ENCODE measurements at regions of chr2 and their contacts with region 1.

Region 1: DNA sequence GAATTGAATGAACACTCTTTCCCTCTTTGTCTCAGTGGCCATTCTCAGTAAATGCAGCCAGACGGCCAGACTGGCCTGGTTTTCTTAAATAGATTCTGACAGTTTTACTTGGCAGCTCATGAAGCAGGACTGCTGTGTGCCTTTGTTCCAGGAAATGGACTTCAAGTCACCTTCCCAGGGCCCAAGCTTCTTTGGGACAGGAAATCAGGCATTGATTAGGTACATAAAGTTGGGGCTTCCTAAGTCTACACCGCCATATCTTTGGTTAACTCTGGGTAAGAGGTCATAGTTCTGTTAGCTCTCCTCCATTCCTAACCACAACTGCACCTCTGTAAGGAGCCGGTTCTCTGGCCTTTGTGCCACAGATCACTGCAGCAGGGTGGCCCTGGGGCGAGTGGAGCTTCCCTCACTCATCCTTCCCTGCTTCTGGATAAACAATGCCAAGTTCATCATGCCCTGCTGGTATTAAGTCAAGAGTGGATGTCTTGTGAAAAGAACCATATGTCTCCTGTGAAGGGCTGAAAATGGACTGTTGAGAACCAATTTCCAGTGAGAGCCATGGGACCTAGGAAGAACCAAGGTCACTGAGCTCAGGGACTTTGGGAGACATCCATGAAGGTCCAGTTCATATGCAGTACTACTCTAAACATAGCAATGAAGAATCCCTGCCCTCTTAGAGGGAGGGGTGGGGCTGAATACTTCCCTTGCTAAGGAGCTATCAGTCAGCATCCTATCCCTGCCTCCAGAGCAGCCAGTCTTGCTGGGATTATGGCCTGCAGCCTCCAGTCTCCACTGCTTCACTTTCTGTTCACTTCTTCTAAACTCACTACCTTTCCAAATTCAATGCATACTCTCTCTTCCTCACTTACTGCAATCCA is 122.6 kb upstream of the XPO1 start:
- DNase-seq: no peak
- H3K4me3 ChIP-seq: no peak overlapping the region
- H3K4me1 ChIP-seq: no peaks in the 10 kb centered on the region
- H3K27me3 ChIP-seq: no peaks in the 10 kb centered on the region

Region 2: DNA sequence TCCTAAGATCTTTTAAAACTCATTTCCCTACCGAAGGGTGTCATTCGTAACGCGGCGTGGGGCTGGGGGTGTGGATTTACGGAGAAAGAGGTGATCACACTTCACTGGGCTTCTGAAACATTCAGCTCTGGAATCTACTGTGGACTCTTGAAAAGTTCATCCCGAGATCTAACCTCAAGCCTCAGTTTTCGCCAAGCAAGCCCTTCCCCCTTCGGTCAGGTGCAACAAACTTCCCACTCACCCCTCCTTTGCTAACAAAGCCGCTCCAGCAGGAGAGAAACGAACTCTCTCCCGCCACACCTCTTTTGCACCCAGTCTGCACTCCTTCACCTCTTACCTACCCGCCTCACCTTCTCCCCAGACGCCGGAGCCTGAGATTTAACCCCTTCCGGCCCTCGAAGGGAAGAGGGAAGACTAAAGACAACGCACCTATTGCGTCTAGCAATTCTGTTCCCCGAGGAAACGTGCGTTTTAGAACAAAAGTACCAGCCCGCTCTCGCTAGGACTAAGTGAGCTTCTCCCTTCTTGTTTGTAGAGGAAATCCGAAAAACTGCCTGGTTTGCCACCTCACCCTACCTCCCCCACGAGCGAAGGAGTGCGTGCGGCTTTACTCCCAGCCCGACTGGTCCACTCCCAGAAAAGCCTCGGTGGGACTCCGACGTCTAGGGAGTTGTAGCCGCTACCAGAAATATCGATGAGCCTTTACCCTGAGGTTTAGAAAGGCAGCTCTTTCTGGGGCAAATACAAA is 643.8 kb before region 1 on chr2:
- in situ Hi-C with region 1: no loop called
- DNase-seq: peak; percentile 77 to 84
- H3K4me3 ChIP-seq: peak overlapping the region; percentile 91
- H3K4me1 ChIP-seq: peaks cover 11% of the 10 kb centered on the region
- H3K27me3 ChIP-seq: no peaks in the 10 kb centered on the region

Region 3: DNA sequence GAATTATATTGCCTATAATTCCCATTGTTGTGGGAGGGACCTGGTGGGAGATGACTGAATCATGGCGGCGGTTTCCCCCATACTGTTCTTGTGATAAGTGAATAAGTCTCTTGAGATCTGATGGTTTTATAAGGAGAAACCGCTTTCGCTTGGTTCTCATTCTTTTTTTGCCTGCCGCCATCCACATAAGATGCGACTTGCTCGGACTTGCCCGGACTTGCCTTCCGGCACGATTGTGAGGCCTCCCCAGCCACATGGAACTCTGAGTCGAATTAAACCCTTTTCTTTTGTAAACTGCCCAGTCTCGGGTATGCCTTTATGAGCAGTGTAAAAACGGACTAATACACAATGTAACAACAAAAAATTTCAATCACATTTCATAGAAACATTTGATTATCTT is 383.0 kb before region 1 on chr2:
- in situ Hi-C with region 1: no loop called
- DNase-seq: peak; percentile 53 to 71
- H3K4me3 ChIP-seq: no peak overlapping the region
- H3K4me1 ChIP-seq: peaks cover 12% of the 10 kb centered on the region
- H3K27me3 ChIP-seq: no peaks in the 10 kb centered on the region

Region 4: DNA sequence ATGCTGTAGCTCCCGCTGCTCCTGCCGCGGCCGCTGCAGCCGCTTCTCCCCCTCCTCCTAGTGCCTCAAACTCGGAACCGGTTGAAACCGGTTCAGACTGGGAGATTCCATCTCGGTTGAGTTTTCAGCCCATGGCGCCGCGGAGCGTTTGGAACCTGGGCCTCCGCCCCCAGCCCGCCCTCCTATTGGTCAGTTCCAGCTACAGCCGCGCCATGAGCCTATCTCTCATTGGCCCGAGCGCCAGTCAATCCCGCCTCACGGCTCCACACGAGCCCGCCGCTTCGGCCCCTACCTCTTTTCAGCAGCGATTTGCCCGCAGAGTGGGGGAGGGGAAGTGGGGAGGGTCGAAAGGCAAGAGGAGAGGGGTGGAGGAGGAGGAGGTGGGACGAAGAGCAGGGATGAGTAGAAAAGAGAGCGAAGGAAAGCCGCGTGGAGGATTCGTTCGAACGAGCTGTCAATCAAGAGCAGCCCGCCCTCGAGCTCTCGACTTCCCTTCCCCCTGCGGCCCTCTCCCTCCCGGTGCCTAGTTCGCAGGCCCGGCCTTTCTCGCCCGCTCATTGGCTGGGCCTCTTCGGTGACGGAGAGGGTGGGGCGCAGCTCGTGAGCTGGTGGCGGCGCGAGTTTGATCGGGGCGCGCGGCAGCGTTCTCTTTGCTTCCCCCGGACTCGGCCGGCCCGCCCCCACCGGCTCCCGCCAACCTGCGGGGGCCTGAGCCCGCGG is 122.4 kb before region 1 on chr2 and contains the start of gene XPO1:
- in situ Hi-C with region 1: loop called (anchors 10 kb)
- DNase-seq: peak; percentile 99 to 100
- H3K4me3 ChIP-seq: peak within 1 kb of the TSS; percentile 77
- H3K4me1 ChIP-seq: peaks cover 29% of the 10 kb centered on the region
- H3K27me3 ChIP-seq: no peaks in the 10 kb centered on the region

Region 5: DNA sequence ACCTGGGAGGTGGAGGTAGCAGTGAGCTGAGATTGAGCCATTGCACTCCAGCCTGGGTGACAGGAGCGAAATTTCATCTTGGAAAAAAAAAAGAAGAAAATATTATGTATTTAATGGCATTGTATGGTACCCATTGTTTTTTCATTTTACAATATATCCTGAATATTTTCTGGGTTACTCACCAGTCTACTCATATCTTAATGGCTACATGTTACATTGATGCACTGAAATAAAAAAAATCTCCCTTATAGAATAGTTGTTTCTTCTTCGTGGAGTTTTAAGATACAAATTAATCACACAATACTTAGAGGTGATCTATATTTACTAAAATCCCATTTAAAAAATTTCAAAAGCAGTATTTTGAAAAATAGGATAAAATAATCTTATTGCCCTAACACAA is 56.3 kb before region 1 on chr2:
- in situ Hi-C with region 1: no loop called
- DNase-seq: no peak
- H3K4me3 ChIP-seq: no peak overlapping the region
- H3K4me1 ChIP-seq: no peaks in the 10 kb centered on the region
- H3K27me3 ChIP-seq: no peaks in the 10 kb centered on the region

Region 6: GRCh38 chr2:61888267-61889055 is 227.7 kb after region 1 on chr2 and contains the start of gene CCT4:
- in situ Hi-C with region 1: no loop called
- DNase-seq: peak; percentile 72 to 90
- H3K4me3 ChIP-seq: peak within 1 kb of the TSS; percentile 96
- H3K4me1 ChIP-seq: peaks cover 7% of the 10 kb centered on the region
- H3K27me3 ChIP-seq: no peaks in the 10 kb centered on the region

Measured in HAP-1 (cell line).